Posterior vena cava (tissue), 2 donors: ENCODE measurements at regions of chr4 and their contacts with region 1.

Region 1: GRCh38 chr4:10079912-10080588 is 36.5 kb downstream of the WDR1 start:
- DNase-seq: no peak

Region 2: DNA sequence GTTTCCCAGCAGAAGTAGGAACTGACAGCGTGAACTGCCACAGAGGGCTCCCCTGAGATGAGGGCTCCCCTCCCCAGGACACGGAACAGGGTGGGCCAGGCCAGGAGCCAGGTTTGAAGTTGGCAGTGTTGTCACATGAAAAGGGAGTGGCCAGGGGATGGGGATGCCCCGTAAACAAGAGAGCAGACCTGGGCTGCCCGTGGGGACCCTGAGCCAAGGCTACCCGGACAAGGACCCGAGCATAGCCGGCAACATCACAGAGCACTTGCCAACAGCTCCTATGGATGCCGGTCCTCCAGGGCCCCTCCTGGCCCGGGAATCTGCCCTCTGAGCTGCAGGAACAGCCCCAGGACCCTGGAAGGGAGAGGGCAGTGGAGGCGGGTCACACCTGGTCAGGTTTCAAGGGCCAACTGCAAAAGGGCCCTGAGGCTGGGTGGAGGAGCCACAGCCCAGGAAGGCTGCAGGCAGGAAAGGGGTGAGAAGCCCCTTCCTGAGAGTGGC is 1385.3 kb before region 1 on chr4:
- intact Hi-C with region 1: loop called in 1 of 2 experiments (anchors 5 kb)
- DNase-seq: peak; percentile 62

Region 3: GRCh38 chr4:9847968-9848748 is 231.9 kb before region 1 on chr4:
- intact Hi-C with region 1: no loop called
- DNase-seq: no peak

Region 4: GRCh38 chr4:9919047-9919446 is 161.0 kb before region 1 on chr4:
- intact Hi-C with region 1: no loop called
- DNase-seq: no peak

Region 5: GRCh38 chr4:10164877-10165283 is 84.8 kb after region 1 on chr4:
- intact Hi-C with region 1: no loop called
- DNase-seq: no peak